Psoas muscle (tissue), 8 donors: ENCODE measurements at regions of chr2 and their contacts with region 1.

Region 1: GRCh38 chr2:168455648-168456520 is at the start of gene CERS6:
- DNase-seq: peak; percentile 97 to 98
- ATAC-seq: peak; percentile 98 to 99 (median 99)
- H3K4me3 ChIP-seq: peak within 1 kb of the TSS; percentile 98
- H3K27ac ChIP-seq: peak within 1 kb of the TSS; percentile 88
- H3K4me1 ChIP-seq: peaks cover 15% of the 10 kb centered on the region
- H3K27me3 ChIP-seq: no peaks in the 10 kb centered on the region
- CTCF ChIP-seq: no peak
- total RNA-seq, gene CERS6: 11.2 to 18.1 (median 13.5) TPM

Region 2: GRCh38 chr2:168521053-168521741 is 65.3 kb after region 1 on chr2:
- intact Hi-C with region 1: loop called in 1 of 2 experiments (anchors 5 kb)
- DNase-seq: peak in 1 of 2 donors; percentile 64
- ATAC-seq: peak; percentile 76 to 91 (median 86)
- H3K4me3 ChIP-seq: peak overlapping the region; percentile 37
- H3K27ac ChIP-seq: peak overlapping the region; percentile 42
- H3K4me1 ChIP-seq: peaks cover 65% of the 10 kb centered on the region
- H3K27me3 ChIP-seq: no peaks in the 10 kb centered on the region
- CTCF ChIP-seq: no peak

Region 3: DNA sequence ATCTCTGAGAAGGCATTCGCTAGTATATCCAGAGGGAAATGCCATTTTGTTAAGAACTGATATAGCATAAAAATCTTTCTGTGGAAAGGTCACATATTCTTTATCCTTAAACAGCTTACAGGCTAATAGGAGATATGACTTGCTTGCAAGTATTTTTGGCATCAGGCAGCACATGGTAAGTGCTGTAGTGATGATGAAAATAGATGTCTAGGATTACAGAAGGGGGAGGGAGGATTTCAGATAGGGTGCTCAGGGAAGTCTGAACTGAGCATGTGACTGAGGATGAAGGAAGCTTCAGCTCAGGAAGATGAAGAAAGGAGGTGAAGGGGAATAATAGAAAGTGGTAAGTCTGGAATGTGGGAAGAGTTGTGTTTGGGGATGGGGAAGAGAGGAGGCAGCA is 188.1 kb after region 1 on chr2:
- intact Hi-C with region 1: loop called in 1 of 2 experiments (anchors 5 kb)
- DNase-seq: no peak
- ATAC-seq: peak; percentile 85 to 92 (median 86)
- H3K4me3 ChIP-seq: peak overlapping the region; percentile 16
- H3K27ac ChIP-seq: peak overlapping the region; percentile 59
- H3K4me1 ChIP-seq: peaks cover 37% of the 10 kb centered on the region
- H3K27me3 ChIP-seq: no peaks in the 10 kb centered on the region
- CTCF ChIP-seq: no peak